Common myeloid progenitor, CD34-positive (primary cell): ENCODE measurements at regions of chr1 and their contacts with region 1.

Region 1: GRCh38 chr1:229661022-229661877 is 35.2 kb downstream of the URB2 start:
- DNase-seq: peak; percentile 69 to 80 (median 78)
- H3K4me3 ChIP-seq: no peak overlapping the region
- H3K27ac ChIP-seq: no peak overlapping the region
- H3K4me1 ChIP-seq: peaks cover 0 to 5% (median 0%) of the 10 kb centered on the region in 4 experiments
- H3K27me3 ChIP-seq: no peaks in the 10 kb centered on the region

Region 2: GRCh38 chr1:229579059-229579673 is 82.1 kb before region 1 on chr1:
- CTCF ChIA-PET with region 1: no interaction called
- POLR2A ChIA-PET with region 1: no interaction called
- DNase-seq: peak; percentile 39 to 68 (median 64)
- H3K4me3 ChIP-seq: peak overlapping the region in 4 of 7 experiments; percentile 54 to 74 (median 64)
- H3K27ac ChIP-seq: no peak overlapping the region
- H3K4me1 ChIP-seq: peaks cover 0 to 12% (median 7%) of the 10 kb centered on the region in 4 experiments
- H3K27me3 ChIP-seq: no peaks in the 10 kb centered on the region

Region 3: GRCh38 chr1:229671310-229671709 is 10.1 kb after region 1 on chr1:
- CTCF ChIA-PET with region 1: interaction called, 25 read pairs
- POLR2A ChIA-PET with region 1: no interaction called
- DNase-seq: no peak
- H3K4me3 ChIP-seq: no peak overlapping the region
- H3K27ac ChIP-seq: no peak overlapping the region
- H3K4me1 ChIP-seq: no peaks in the 10 kb centered on the region
- H3K27me3 ChIP-seq: no peaks in the 10 kb centered on the region

Region 4: DNA sequence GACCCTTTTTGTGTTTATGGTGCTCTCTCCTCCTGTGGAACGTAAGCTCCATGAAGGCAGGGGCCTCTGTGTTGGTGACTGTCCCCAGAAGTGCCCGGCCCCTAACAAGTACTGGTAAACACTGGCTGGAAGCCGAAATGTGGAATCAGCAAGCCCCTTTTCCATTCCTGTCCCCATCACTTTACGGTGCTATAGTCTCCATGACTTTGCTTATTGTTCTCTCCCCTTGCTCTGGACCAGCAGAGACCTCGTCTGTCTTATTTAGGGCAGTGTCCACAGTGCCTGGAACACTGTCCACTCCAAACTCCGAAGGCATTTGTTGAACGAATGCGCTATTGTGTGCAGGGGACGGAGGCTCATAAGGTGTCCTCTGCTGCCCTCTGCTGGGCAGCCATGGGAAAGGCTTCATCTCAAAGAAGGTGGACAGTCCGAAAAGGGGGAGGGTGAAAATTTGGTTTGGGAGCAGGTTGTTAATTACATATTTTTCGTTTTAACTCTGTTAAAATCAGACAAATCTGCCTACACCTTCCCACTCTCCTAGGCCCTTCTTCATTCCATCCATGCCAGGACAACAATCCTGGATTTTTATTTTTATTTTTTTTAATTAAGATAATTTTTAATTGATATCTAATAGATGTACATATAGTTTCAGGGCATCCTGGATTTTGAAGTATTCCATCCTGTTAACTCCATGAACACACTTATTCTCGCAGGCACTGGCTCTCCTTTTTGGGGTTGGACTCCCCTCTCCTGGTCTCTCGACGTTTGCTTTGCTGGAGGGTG is 649.3 kb after region 1 on chr1:
- CTCF ChIA-PET with region 1: interaction called, 142 read pairs
- POLR2A ChIA-PET with region 1: no interaction called
- DNase-seq: peak; percentile 70 to 76 (median 70)
- H3K4me3 ChIP-seq: peak overlapping the region in 2 of 7 experiments; percentile 48 to 52
- H3K27ac ChIP-seq: no peak overlapping the region
- H3K4me1 ChIP-seq: peaks cover 0 to 3% (median 0%) of the 10 kb centered on the region in 4 experiments
- H3K27me3 ChIP-seq: no peaks in the 10 kb centered on the region